Right ventricle myocardium inferior (tissue), 1 donor: ENCODE measurements at regions of chr12 and their contacts with region 1.

Region 1: DNA sequence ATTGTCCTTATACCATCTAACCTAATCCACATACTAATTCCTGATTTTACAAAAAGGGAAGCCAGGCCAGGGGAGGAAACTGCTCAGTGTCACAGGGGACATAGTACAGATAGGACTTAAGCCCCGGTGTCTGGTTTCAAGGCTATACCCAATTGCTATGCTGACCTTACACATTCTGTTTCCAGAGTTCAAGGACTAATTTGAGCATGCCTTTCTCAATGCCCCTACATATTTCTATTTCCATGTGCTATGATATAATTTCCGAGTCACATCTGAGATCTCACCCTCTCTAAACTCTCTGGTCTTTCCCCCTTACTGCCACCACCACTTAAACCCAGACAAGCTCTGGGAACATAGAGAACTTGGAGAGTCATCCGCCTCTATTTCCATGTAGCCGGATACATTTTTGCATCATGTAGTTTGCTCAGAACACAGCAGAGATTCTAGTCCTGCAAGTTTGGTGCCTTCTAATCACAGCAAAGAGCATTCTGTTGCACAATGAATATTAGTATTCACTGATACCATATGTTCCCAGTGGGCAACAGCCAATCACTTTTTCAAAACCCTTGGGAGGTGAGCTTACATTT is 34.2 kb downstream of the PPM1H start:
- DNase-seq: no peak
- ATAC-seq: peak; percentile 76

Region 2: GRCh38 chr12:62827042-62827441 is 73.7 kb before region 1 on chr12:
- intact Hi-C with region 1: loop called (anchors 5 kb)
- DNase-seq: no peak
- ATAC-seq: no peak

Region 3: GRCh38 chr12:62866451-62867082 is 34.2 kb before region 1 on chr12:
- intact Hi-C with region 1: loop called (anchors 5 kb)
- DNase-seq: no peak
- ATAC-seq: peak; percentile 23